SK-N-SH (cell line): ENCODE measurements at regions of chr5 and their contacts with region 1.

Region 1: DNA sequence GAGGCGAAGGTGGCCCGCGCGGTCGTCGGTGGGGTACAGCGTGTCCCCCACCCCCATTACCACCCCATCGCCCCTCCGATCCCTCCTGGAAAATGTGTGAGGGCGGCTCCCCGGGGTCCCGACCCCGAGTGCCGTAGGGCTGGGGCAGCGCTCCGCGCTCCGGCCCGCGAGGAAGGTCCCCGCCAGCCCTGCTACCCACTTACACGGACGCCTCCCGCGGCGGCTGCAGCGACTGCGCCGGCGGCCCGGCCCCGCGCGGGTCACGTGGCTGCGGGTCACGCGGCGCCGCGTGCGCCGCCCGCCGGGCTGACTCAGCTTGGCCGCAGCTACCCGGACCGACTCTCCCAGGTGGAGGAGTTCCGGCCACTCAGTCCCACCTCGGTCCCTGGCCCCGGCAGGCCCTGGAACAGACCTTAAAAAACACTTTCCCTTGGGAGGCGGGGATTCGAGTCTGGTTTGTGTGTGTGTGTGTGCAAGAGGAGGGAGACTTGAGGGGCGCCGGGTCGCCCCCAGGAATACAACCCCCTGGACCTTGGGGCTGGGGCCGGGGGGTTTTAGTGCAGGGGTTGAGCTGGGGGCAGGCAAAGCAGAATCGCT is at the start of gene GNPDA1:
- DNase-seq: peak; percentile 94
- H3K4me3 ChIP-seq: peak within 1 kb of the TSS; percentile 78 to 85
- H3K27ac ChIP-seq: peak within 1 kb of the TSS; percentile 64 to 84
- H3K4me1 ChIP-seq: peaks cover 17 to 24% of the 10 kb centered on the region in 2 experiments
- H3K27me3 ChIP-seq: no peaks in the 10 kb centered on the region
- CTCF ChIP-seq: no peak
- EP300 ChIP-seq: peak in 1 of 2 experiments; percentile 20; a peak in 1 of 4 replicates
- RAD21 ChIP-seq: no peak
- polyA plus RNA-seq, gene GNPDA1: 23.9 and 27.4 TPM in 2 replicates

Region 2: GRCh38 chr5:141976176-141976575 is 36.7 kb before region 1 on chr5:
- CTCF ChIA-PET with region 1: interaction called, 17 read pairs
- POLR2A ChIA-PET with region 1: no interaction called
- DNase-seq: no peak
- H3K4me3 ChIP-seq: no peak overlapping the region
- H3K27ac ChIP-seq: no peak overlapping the region
- H3K4me1 ChIP-seq: peaks cover 8 to 9% of the 10 kb centered on the region in 2 experiments; a peak in 3 of 4 replicates
- H3K27me3 ChIP-seq: no peaks in the 10 kb centered on the region
- CTCF ChIP-seq: no peak
- EP300 ChIP-seq: no peak
- RAD21 ChIP-seq: no peak

Region 3: DNA sequence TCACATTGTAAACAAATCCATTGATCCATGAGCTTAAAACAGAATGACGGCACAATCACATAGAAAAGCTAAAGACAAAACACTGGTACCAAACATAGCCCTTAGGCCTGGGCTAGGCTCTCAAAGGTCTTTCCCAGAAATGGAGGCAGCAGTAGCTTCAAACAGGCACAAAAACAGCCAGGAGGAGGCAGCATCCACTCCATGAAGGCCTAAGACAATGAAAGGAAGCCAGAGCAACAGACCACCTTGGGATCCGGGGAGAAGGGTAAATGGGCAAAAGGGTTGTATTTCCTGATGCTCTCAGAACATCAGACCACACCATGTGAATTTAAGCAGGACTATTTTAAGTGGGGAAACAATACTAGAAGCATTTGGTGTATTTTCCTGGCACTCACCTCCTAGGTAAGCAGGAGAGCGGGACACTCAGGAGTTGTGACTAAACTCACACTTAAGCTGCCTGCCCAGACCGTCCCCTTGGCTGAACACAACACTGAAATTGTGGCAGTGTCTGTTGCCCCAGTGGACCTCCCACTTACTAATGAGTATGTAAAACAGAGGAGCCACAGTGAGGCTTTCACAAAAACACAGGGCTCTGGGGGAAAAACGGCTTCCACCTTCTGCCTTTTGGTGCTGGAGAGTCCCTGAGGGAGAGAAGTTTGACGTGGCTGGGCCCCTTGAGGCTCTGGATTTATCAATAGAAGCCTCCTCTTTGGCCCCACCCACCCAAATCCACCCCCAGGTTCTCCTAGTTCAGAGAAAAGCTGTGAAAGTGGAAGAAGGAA is 12.0 kb before region 1 on chr5:
- CTCF ChIA-PET with region 1: interaction called, 34 read pairs
- POLR2A ChIA-PET with region 1: interaction called, 3 read pairs
- DNase-seq: no peak
- H3K4me3 ChIP-seq: no peak overlapping the region
- H3K27ac ChIP-seq: peak overlapping the region in 1 of 2 experiments; percentile 20; a peak in 1 of 4 replicates
- H3K4me1 ChIP-seq: peaks cover 0 to 4% of the 10 kb centered on the region in 2 experiments; a peak in 1 of 4 replicates
- H3K27me3 ChIP-seq: no peaks in the 10 kb centered on the region
- CTCF ChIP-seq: peak; percentile 50
- EP300 ChIP-seq: no peak
- RAD21 ChIP-seq: peak; percentile 43

Region 4: DNA sequence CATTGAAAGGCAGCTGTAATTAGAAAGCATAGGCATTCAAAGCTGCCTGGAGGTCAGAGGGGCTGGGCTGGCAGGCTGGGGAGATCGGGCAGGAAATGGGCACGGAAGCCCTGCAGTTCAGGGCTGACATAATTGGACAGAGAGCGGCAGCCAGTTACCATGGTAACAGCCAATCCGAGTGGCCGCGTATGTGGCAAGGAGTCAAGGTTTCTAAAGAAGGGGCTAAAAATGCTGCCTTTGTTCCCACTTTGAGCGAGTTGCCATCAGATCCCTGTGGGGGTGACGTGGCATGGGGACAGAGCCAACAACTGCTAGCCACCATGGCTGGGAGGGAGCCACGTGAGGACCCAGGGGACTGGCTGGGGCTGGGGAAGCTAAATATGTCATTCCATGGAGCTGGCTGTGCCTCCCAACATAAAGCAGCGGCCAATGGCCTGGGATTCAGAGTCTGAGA is 51.0 kb after region 1 on chr5:
- CTCF ChIA-PET with region 1: interaction called, 35 read pairs
- POLR2A ChIA-PET with region 1: interaction called, 8 read pairs
- DNase-seq: peak; percentile 82
- H3K4me3 ChIP-seq: peak overlapping the region; percentile 10 to 29; a peak in 3 of 4 replicates
- H3K27ac ChIP-seq: peak overlapping the region; percentile 62 to 98
- H3K4me1 ChIP-seq: peaks cover 15 to 39% of the 10 kb centered on the region in 2 experiments
- H3K27me3 ChIP-seq: no peaks in the 10 kb centered on the region
- CTCF ChIP-seq: no peak
- EP300 ChIP-seq: no peak; a peak in 1 of 4 replicates
- RAD21 ChIP-seq: no peak

Region 5: DNA sequence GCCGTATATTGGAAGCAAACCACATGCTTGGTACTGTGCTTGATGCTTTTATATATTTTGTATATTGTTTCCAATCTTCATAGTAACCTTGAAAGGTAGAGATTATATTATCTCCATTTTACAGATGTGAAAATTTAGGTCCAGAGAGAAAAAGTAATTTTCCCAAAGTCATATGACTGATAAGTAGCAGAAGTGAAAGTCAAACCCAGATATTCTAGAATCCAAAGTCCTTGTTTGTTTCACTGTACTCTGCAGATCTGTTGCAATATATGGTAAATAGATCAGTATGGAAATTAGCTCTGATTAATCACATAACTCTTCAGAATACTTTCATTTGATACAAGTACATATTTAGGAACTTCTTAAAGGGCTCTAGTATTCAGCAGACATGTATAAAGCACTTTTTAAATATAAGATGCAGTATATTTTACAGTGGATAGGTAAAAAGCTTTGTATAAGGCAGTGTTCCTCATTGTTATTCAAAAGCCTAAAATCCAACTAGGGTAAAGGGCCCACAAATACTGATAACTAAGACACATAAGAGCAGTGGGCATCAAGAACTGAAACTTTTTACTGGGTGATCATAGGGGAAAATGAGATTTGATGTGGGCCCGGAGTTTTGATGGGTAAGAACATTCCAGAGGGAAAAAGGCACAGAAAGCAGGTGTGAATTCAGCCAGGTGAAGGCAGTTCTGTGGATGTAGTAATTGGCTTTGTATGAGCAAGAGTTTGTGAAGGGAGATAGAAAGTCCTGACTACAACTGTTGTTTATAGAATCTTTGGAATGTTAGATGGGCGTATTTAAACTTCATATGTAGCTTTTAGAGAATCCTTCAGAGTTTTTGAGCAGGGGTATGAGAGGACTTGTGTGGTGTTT is 120.7 kb after region 1 on chr5:
- CTCF ChIA-PET with region 1: interaction called, 44 read pairs
- POLR2A ChIA-PET with region 1: interaction called, 3 read pairs
- DNase-seq: no peak
- H3K4me3 ChIP-seq: no peak overlapping the region
- H3K27ac ChIP-seq: no peak overlapping the region
- H3K4me1 ChIP-seq: peaks cover 0 to 6% of the 10 kb centered on the region in 2 experiments; a peak in 1 of 4 replicates
- H3K27me3 ChIP-seq: no peaks in the 10 kb centered on the region
- CTCF ChIP-seq: no peak
- EP300 ChIP-seq: no peak
- RAD21 ChIP-seq: no peak

Region 6: GRCh38 chr5:142296914-142297417 is 284.1 kb after region 1 on chr5:
- CTCF ChIA-PET with region 1: no interaction called
- POLR2A ChIA-PET with region 1: no interaction called
- DNase-seq: no peak
- H3K4me3 ChIP-seq: no peak overlapping the region
- H3K27ac ChIP-seq: peak overlapping the region; percentile 74 to 93
- H3K4me1 ChIP-seq: peaks cover 25 to 28% of the 10 kb centered on the region in 2 experiments
- H3K27me3 ChIP-seq: no peaks in the 10 kb centered on the region
- CTCF ChIP-seq: no peak
- EP300 ChIP-seq: no peak; a peak in 1 of 4 replicates
- RAD21 ChIP-seq: no peak